GM12878 (cell line): ENCODE measurements at regions of chr6 and their contacts with region 1.

Region 1: GRCh38 chr6:36678518-36679027 is at the start of gene CDKN1A:
- DNase-seq: no peak
- ATAC-seq: peak; percentile 75
- H3K4me3 ChIP-seq: peak within 1 kb of the TSS; percentile 75
- H3K27ac ChIP-seq: peak within 1 kb of the TSS; percentile 88
- H3K4me1 ChIP-seq: peaks cover 44% of the 10 kb centered on the region
- H3K27me3 ChIP-seq: no peaks in the 10 kb centered on the region
- CTCF ChIP-seq: no peak
- EP300 ChIP-seq: 0 out of 4 replicates have a peak, but pooled peaks of 1 of the 2 experiments have one; percentile 38
- POLR2A ChIP-seq: peak; percentile 95
- RAD21 ChIP-seq: no peak
- polyA plus RNA-seq, gene CDKN1A: 25.2 to 48.4 TPM

Region 2: DNA sequence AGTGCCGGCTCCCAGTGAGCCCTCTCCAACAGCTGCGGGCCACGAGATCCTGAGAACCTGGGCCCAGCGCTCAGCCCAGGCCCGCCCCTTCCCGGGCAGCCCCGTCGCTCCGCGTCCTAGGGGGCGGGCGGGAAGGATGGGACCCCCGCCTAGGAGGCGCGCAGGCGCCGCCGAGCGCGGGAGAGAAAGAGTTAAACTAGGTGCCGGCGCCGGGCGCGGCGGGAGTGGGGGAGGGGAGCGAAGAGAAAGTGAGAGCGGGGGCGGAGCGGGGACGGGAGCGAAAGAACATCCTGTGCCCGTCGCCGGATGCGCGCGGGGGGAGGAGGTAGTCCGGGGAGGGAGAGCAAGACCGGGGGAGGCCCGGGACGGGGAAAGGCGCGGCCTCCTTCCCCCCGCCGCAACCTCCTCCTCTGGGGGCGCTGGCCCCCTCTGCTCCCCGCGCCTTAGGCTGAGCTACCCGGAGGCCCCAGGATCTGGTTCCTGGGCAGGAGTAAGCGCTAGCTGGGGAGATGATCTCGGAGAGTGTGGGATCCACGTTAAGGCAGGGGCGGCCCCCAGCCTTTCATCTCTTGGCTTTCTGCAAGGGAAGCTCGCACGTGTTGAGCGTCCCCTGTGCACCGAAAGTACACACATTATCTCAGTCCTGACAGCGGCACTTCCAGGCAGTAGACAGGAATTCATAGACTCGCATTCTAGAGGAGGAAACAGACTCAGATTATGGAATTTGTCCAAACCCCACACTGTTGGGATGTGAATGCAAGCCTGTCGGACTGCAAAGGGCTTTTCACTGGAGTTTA is 946.6 kb before region 1 on chr6:
- CTCF ChIA-PET with region 1: no interaction called
- POLR2A ChIA-PET with region 1: no interaction called
- RAD21 ChIA-PET with region 1: no interaction called
- SMC1A ChIA-PET with region 1: no interaction called
- in situ Hi-C with region 1: no loop called
- intact Hi-C with region 1: no loop called
- DNase-seq: peak; percentile 67
- ATAC-seq: peak; percentile 70
- H3K4me3 ChIP-seq: peak overlapping the region; percentile 86
- H3K27ac ChIP-seq: peak overlapping the region; percentile 89
- H3K4me1 ChIP-seq: peaks cover 44% of the 10 kb centered on the region
- H3K27me3 ChIP-seq: no peaks in the 10 kb centered on the region
- CTCF ChIP-seq: peak in 2 of 3 experiments; percentile 1 to 22; a peak in 1 of 6 replicates
- EP300 ChIP-seq: peak; percentile 33 to 68; a peak in 1 of 4 replicates
- POLR2A ChIP-seq: peak; percentile 70
- RAD21 ChIP-seq: no peak

Region 3: GRCh38 chr6:36423101-36423824 is 255.3 kb before region 1 on chr6:
- CTCF ChIA-PET with region 1: interaction called, 3 read pairs
- POLR2A ChIA-PET with region 1: no interaction called
- RAD21 ChIA-PET with region 1: interaction called, 7 read pairs
- SMC1A ChIA-PET with region 1: no interaction called
- in situ Hi-C with region 1: no loop called
- intact Hi-C with region 1: loop called (anchors 5 kb)
- DNase-seq: peak; percentile 85
- ATAC-seq: peak; percentile 98
- H3K4me3 ChIP-seq: peak overlapping the region; percentile 69
- H3K27ac ChIP-seq: peak overlapping the region; percentile 82
- H3K4me1 ChIP-seq: peaks cover 8% of the 10 kb centered on the region
- H3K27me3 ChIP-seq: no peaks in the 10 kb centered on the region
- CTCF ChIP-seq: peak; percentile 74 to 84 (median 74)
- EP300 ChIP-seq: no peak
- POLR2A ChIP-seq: peak; percentile 80
- RAD21 ChIP-seq: peak; percentile 74

Region 4: GRCh38 chr6:36599791-36600209 is 78.8 kb before region 1 on chr6:
- CTCF ChIA-PET with region 1: interaction called, 8 read pairs
- POLR2A ChIA-PET with region 1: interaction called, 11 read pairs
- RAD21 ChIA-PET with region 1: interaction called, 3 read pairs
- SMC1A ChIA-PET with region 1: interaction called, 4 read pairs
- in situ Hi-C with region 1: no loop called
- intact Hi-C with region 1: no loop called
- DNase-seq: no peak
- ATAC-seq: peak; percentile 84
- H3K4me3 ChIP-seq: peak overlapping the region; percentile 73
- H3K27ac ChIP-seq: no peak overlapping the region
- H3K4me1 ChIP-seq: peaks cover 3% of the 10 kb centered on the region; the same call in 1 of the 2 replicates
- H3K27me3 ChIP-seq: no peaks in the 10 kb centered on the region
- CTCF ChIP-seq: no peak
- EP300 ChIP-seq: no peak
- POLR2A ChIP-seq: peak; percentile 66
- RAD21 ChIP-seq: no peak

Region 5: DNA sequence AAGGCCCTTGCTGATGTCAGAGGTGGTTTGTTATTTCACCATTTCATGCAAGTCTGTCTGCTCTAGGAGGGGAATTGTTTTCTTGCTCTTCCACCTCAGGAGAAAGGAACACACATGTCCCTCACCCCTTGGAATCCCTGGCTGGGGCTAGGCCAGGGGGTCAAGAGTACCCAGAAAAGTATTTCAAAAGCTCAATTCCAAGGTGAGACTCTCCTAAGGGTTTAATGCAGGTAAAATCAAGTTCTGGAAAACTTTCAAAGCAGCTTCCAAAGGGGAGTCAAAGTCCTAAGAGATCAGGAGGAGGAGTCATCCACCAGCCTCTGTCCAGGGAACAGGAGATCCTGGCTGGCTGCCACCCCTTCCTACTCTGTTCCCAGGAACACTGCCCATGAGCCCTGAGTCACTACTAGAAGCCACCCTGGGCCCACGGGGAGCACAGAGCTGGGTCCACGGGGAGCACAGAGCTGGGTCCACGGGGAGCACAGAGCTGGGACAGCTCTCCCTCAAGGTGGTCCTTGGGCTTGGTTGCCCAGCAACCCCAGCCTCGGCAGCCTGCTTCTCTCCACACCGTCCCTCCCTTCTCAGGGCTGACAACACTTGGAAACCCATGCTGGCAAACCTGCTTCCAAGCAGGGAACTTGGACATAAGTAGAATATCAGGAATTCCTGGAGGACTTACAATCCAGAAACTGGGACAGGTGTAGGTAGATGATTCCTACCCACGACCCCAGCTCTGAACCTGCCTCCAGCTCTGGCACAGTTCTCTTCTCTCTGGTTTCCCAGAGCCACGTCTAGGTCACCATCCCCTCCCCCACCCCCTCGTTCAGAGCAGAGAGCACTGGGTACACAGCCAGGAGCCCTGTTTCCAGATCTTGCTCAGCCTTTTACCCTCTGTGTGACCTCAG is 35.4 kb before region 1 on chr6:
- CTCF ChIA-PET with region 1: no interaction called
- POLR2A ChIA-PET with region 1: interaction called, 9 read pairs
- RAD21 ChIA-PET with region 1: interaction called, 4 read pairs
- SMC1A ChIA-PET with region 1: interaction called, 240 read pairs
- in situ Hi-C with region 1: no loop called
- intact Hi-C with region 1: no loop called
- DNase-seq: no peak
- ATAC-seq: no peak
- H3K4me3 ChIP-seq: no peak overlapping the region
- H3K27ac ChIP-seq: no peak overlapping the region
- H3K4me1 ChIP-seq: peaks cover 12% of the 10 kb centered on the region
- H3K27me3 ChIP-seq: no peaks in the 10 kb centered on the region
- CTCF ChIP-seq: no peak
- EP300 ChIP-seq: no peak
- POLR2A ChIP-seq: no peak
- RAD21 ChIP-seq: no peak

Region 6: GRCh38 chr6:36724514-36725390 is 46.2 kb after region 1 on chr6:
- CTCF ChIA-PET with region 1: interaction called, 9 read pairs
- POLR2A ChIA-PET with region 1: interaction called, 10 read pairs
- RAD21 ChIA-PET with region 1: interaction called, 19 read pairs
- SMC1A ChIA-PET with region 1: interaction called, 11 read pairs
- in situ Hi-C with region 1: no loop called
- intact Hi-C with region 1: loop called (anchors 2 kb)
- DNase-seq: no peak
- ATAC-seq: peak; percentile 34
- H3K4me3 ChIP-seq: no peak overlapping the region
- H3K27ac ChIP-seq: 0 out of 2 replicates have a peak overlapping the region, but pooled peaks have one; percentile 9
- H3K4me1 ChIP-seq: peaks cover 36% of the 10 kb centered on the region
- H3K27me3 ChIP-seq: no peaks in the 10 kb centered on the region
- CTCF ChIP-seq: peak; percentile 43 to 69 (median 51)
- EP300 ChIP-seq: no peak
- POLR2A ChIP-seq: no peak
- RAD21 ChIP-seq: peak; percentile 69

Region 7: DNA sequence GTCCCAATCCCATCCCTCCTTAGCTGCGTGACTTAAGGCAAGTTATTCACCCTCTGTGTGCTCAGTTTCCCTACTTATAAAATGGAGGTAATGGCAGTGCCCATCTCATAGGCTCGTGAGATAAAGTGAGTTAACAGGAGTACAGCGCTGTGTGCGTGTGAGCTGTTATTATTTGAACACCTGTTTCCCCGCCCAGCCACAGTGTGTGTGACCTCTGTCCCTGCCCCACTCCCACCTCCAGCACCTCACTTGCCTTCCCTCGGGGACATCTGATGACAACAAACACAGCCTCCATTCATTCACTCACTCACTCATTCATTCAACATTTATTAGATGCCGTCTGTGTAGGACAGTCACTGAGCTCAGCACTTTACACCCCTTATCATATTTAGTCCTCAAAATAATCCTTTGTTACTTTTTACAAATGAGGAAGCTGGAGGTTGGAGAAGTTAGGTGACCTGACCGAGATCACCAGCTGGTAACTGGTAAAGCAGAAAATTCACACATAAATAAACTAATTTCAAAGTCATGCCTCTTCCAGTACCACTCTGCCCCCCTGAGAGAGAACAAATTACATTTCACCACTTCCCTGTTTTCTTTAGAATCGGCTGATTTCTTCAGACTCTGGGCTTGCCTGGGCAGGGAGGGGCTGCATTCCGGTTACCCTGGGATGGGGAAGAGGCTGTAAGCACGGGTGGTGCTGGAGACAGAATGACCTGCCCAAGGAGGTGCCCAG is 102.0 kb after region 1 on chr6:
- CTCF ChIA-PET with region 1: interaction called, 11 read pairs
- POLR2A ChIA-PET with region 1: interaction called, 7 read pairs
- RAD21 ChIA-PET with region 1: interaction called, 3 read pairs
- SMC1A ChIA-PET with region 1: interaction called, 5 read pairs
- in situ Hi-C with region 1: no loop called
- intact Hi-C with region 1: no loop called
- DNase-seq: no peak
- ATAC-seq: no peak
- H3K4me3 ChIP-seq: no peak overlapping the region
- H3K27ac ChIP-seq: no peak overlapping the region
- H3K4me1 ChIP-seq: peaks cover 21% of the 10 kb centered on the region
- H3K27me3 ChIP-seq: peaks cover 0 to 6% of the 10 kb centered on the region in 2 experiments; a peak in 1 of 4 replicates
- CTCF ChIP-seq: no peak
- EP300 ChIP-seq: no peak
- POLR2A ChIP-seq: no peak
- RAD21 ChIP-seq: no peak

Region 8: DNA sequence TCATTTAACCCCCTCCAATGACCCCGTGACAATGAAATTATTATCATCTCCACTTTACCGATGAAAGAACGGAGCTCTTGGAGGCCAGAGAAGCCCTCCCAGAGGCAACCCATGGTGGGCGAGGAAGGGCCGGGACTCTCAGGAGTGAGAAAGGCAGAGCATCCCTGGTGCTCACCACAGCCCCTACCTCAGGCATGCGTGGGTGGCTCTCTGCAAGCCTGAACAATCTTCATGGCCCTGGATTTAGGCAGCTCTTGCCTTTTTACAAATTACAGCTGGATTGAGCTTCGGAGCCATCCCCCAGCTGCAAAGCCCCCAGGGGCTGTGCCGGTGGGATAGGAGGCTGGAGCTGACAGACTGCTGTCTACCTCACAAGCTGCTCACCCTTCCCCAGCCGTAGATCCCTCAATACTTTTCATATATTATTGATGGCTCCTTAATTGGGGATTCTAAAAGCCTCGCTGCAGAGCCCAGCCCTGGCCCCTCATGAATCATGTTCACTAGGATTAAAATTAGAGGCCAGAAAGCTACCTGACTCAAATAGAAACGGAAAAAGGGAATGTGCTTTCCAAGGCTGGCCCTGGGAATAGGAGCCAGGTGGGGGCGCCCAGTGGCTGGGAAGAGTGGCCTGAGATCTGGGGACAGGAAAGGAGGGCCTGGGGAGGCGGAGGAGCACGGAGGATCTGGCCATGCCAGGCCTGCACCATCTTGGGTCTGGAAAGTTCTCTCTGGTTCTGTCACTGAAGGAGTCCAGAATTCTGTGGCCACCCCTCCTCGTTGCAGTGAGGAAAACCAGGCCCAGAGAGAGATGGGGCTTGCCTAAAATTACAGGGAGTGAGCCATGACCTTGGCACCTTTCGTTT is 131.6 kb after region 1 on chr6:
- CTCF ChIA-PET with region 1: no interaction called
- POLR2A ChIA-PET with region 1: no interaction called
- RAD21 ChIA-PET with region 1: no interaction called
- SMC1A ChIA-PET with region 1: no interaction called
- in situ Hi-C with region 1: no loop called
- intact Hi-C with region 1: no loop called
- DNase-seq: no peak
- ATAC-seq: no peak
- H3K4me3 ChIP-seq: no peak overlapping the region
- H3K27ac ChIP-seq: no peak overlapping the region
- H3K4me1 ChIP-seq: no peaks in the 10 kb centered on the region
- H3K27me3 ChIP-seq: no peaks in the 10 kb centered on the region; a peak in 1 of 4 replicates
- CTCF ChIP-seq: no peak
- EP300 ChIP-seq: no peak
- POLR2A ChIP-seq: no peak
- RAD21 ChIP-seq: no peak